Activated CD8-positive, alpha-beta T cell treated with anti-CD3 and anti-CD28 coated beads for 36 hours (primary cell): ENCODE measurements at regions of chr1 and their contacts with region 1.

Region 1: GRCh38 chr1:154335025-154335714 is 9.8 kb downstream of the ATP8B2 start:
- DNase-seq: peak; percentile 99
- ATAC-seq: peak; percentile 97
- H3K4me3 Mint-ChIP-seq: no peak overlapping the region
- H3K27ac Mint-ChIP-seq: peak overlapping the region; percentile 88
- H3K4me1 Mint-ChIP-seq: peaks cover 61% of the 10 kb centered on the region
- H3K27me3 Mint-ChIP-seq: no peaks in the 10 kb centered on the region
- CTCF ChIP-seq: peak; percentile 85

Region 2: DNA sequence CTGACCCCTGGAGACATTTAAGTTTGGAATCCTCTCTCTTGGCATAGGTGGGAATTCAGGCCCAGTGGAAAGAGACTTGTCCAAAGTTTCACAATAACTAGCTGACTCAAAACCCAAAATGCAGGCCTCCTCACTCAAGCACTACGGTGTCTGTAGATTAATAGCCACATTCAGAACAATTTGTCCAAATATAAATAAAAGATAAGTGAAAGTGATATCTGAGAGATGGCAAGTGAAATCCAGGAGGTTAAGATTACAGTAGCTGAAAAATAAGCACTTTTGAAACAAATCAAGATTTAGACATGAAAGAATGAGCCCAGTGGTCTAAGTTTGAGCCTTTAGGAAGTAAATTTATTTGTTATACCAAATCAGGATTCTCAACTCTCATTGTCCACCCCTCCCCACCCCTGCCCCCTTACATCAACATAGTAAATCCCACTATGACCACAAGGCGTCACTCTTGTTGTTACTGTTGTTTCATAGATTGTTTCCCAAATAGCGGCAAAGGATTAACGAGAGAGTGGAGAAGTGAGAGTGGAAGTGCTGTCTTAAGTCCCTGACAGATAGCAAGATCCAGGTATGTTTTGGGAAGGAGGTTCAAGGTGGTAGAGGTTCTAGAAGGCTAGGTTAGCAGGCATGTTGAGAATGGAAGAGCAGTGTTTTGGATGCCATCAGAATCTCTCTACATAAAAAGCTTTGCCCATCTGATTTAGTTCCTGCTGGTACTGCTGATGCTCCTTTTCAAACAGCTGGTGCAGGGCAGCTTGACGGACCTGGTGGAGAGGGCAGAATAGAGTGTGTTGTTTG is 136.2 kb before region 1 on chr1:
- CTCF ChIA-PET with region 1: interaction called, 20 read pairs
- POLR2A ChIA-PET with region 1: no interaction called
- intact Hi-C with region 1: no loop called
- DNase-seq: peak; percentile 65
- ATAC-seq: peak; percentile 82
- H3K4me3 Mint-ChIP-seq: no peak overlapping the region
- H3K27ac Mint-ChIP-seq: no peak overlapping the region
- H3K4me1 Mint-ChIP-seq: no peaks in the 10 kb centered on the region
- H3K27me3 Mint-ChIP-seq: peaks cover 3% of the 10 kb centered on the region
- CTCF ChIP-seq: peak; percentile 69

Region 3: GRCh38 chr1:154272217-154272998 is 62.8 kb before region 1 on chr1 and contains the start of gene HAX1:
- CTCF ChIA-PET with region 1: interaction called, 45 read pairs
- POLR2A ChIA-PET with region 1: interaction called, 4 read pairs
- intact Hi-C with region 1: no loop called
- DNase-seq: peak; percentile 100
- ATAC-seq: peak; percentile 92
- H3K4me3 Mint-ChIP-seq: peak within 1 kb of the TSS; percentile 99
- H3K27ac Mint-ChIP-seq: peak within 1 kb of the TSS; percentile 99
- H3K4me1 Mint-ChIP-seq: peaks cover 47% of the 10 kb centered on the region
- H3K27me3 Mint-ChIP-seq: no peaks in the 10 kb centered on the region
- CTCF ChIP-seq: peak; percentile 85
- total RNA-seq, gene HAX1: 163 to 170 TPM

Region 4: DNA sequence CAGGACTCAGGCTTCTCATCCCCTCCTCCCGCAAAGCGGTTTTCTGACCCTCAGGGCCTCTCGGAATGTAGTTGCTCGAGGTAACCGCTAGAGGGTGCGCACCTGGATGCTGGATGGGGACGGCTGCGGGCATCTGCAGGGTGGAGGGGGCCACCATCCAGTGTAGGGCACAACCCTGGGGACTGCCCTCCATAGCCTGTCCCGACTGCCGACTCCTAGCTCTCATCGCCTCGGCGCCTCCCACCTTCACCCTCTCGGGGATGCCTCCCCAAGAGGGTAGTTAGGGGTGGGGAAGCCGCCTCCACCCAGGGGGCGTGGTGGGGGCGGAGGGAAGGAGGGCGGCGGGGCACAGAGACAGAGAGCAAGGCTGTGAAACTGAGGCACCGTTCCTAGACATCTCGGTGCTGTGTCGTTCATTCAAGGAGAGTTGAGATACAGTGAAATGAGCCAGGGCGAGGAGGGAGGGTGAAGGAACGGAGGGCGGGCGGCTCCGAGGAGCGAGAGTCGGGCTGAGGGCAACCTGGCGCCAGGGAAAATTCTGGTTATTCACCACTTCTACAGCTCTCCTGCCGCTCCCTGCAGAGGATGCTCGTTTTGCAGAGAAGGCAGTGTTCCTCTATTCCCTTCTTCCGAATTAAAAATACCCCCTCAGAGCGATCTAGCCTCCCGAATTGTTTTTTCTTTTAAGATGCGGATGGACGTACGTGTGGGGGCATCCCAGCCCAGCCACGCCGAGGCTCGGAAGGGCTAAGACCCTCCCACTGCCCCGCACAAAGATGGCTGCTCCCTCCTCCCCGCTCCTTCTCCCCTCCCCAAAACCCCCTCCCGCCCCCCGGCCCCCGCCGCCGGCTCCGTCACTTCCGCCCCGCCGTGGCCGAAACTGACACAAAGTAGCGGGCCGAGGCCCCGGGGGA is 10.2 kb before region 1 on chr1 and contains the start of gene ATP8B2:
- CTCF ChIA-PET with region 1: interaction called, 214 read pairs
- POLR2A ChIA-PET with region 1: interaction called, 33 read pairs
- intact Hi-C with region 1: no loop called
- DNase-seq: peak; percentile 89
- ATAC-seq: peak; percentile 69
- H3K4me3 Mint-ChIP-seq: peak within 1 kb of the TSS; percentile 100
- H3K27ac Mint-ChIP-seq: peak within 1 kb of the TSS; percentile 96
- H3K4me1 Mint-ChIP-seq: peaks cover 39% of the 10 kb centered on the region
- H3K27me3 Mint-ChIP-seq: no peaks in the 10 kb centered on the region
- CTCF ChIP-seq: peak; percentile 96
- total RNA-seq, gene ATP8B2: 52.2 to 54.7 TPM

Region 5: DNA sequence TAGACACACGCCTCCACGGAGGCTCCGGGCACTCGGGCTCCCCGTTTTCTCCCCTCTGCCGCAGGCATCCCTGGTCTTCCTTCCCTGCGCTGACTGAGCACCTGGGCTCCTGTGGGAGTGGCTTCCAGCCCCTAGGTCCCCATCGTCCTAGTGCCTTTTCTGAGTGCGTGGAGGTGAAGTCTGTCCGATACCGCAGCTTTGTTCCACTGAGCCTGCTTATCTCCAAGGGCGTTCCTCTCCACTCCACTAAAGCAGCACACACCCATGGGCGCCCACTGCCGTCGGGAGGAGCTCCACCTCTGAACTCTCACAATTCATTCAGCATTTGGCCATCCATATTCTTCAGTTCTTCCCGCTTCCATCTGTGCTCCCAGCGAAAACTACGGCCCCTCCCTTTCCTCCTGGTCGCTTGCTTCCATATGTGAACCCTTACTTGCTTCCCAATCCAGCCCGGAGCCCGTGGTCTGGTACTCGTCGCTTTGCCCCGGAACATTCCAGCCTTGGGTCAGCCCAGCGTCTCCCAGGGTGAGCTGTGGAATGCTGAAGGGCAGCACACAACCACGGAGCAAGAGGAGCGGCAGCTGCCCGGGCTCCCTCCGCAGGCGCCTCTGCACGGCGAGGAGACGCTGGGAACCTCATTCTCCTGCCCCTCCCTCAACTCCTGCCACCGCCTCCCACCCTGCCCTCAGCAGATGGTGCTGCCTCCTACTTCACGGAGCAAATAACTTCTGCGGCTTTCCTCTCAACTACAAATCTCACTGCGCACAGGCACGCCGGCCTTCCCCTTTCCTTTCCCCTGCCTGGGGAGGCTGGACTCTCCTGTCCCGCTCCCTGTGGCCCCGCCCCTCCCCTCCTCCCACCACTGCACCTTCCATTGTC is 17.6 kb after region 1 on chr1:
- CTCF ChIA-PET with region 1: interaction called, 46 read pairs
- POLR2A ChIA-PET with region 1: interaction called, 5 read pairs
- intact Hi-C with region 1: no loop called
- DNase-seq: peak; percentile 69
- ATAC-seq: peak; percentile 78
- H3K4me3 Mint-ChIP-seq: peak overlapping the region; percentile 69
- H3K27ac Mint-ChIP-seq: peak overlapping the region; percentile 64
- H3K4me1 Mint-ChIP-seq: peaks cover 35% of the 10 kb centered on the region
- H3K27me3 Mint-ChIP-seq: no peaks in the 10 kb centered on the region
- CTCF ChIP-seq: no peak

Region 6: DNA sequence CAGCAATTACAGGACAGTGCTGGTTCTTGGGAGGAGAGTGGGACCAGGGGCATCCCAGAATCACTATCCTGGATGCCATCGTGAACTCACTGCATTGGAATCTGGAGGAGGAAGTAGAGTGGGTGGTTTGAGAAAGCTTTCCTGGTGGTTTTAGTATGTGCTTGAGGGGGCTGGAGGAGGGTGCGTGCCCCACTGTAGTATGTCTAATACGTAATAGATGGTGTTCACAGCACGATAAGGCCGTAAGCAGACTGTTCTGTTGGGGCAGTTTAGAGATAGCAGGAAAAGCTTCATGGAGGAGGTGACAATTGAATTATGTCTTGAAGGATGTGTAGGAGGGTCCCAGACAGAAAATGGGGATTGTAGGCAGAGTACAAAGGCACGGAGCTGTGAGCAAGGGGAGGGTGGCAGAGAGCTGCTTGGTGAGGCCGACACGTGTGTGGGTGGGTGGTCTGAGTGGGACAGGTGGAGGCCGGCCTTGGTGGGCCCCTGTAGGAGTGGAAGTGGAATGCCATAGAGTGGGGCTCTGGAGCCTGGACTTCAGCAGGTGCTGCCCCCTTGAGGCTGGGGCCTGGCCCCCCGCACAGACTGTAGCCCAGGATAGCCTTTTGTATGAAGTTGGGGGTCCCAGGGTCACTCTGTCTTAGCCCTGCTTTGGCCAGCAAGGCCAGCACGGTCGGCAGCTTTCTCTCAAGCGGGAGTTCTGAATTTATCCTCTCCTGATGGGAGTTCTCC is 107.0 kb after region 1 on chr1:
- CTCF ChIA-PET with region 1: interaction called, 10 read pairs
- POLR2A ChIA-PET with region 1: no interaction called
- intact Hi-C with region 1: no loop called
- DNase-seq: no peak
- ATAC-seq: no peak
- H3K4me3 Mint-ChIP-seq: no peak overlapping the region
- H3K27ac Mint-ChIP-seq: peak overlapping the region; percentile 51
- H3K4me1 Mint-ChIP-seq: peaks cover 68% of the 10 kb centered on the region
- H3K27me3 Mint-ChIP-seq: no peaks in the 10 kb centered on the region
- CTCF ChIP-seq: peak; percentile 37